GM12878 (cell line): ENCODE measurements at regions of chr2 and their contacts with region 1.

Region 1: GRCh38 chr2:102240640-102241370 is 54.0 kb downstream of the IL1RL2 start:
- DNase-seq: peak; percentile 88
- ATAC-seq: peak; percentile 96
- H3K4me3 ChIP-seq: no peak overlapping the region
- H3K27ac ChIP-seq: no peak overlapping the region
- H3K4me1 ChIP-seq: peaks cover 13% of the 10 kb centered on the region; the same call in 1 of the 2 replicates
- H3K27me3 ChIP-seq: no peaks in the 10 kb centered on the region
- CTCF ChIP-seq: peak; percentile 95 to 98 (median 97); a peak in 5 of 6 replicates
- EP300 ChIP-seq: peak; percentile 64 to 69; a peak in 3 of 4 replicates
- POLR2A ChIP-seq: no peak
- RAD21 ChIP-seq: peak; percentile 90

Region 2: DNA sequence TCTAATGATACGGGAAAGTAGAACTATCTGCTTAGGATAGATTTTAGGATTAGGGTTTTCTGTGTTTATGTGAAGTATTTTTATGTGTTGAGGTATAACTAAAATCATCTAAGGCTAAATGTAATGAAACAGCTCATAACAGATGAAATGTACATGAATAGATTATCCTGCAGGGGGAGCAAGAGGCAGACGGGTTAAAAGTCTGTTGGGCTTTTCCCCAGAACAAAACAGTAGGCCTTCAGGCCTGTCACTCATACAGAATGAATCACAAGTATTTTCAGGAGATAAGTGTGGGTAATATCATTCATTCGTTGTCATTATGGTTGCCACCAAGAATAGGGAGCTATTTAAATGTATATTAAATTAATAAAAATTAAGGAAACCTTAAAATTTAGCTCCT is 356.9 kb before region 1 on chr2:
- CTCF ChIA-PET with region 1: interaction called, 169 read pairs
- POLR2A ChIA-PET with region 1: no interaction called
- RAD21 ChIA-PET with region 1: interaction called, 113 read pairs
- SMC1A ChIA-PET with region 1: interaction called, 103 read pairs
- in situ Hi-C with region 1: loop called (anchors 5 kb)
- intact Hi-C with region 1: loop called (anchors 1 kb)
- DNase-seq: no peak
- ATAC-seq: peak; percentile 95
- H3K4me3 ChIP-seq: no peak overlapping the region
- H3K27ac ChIP-seq: no peak overlapping the region
- H3K4me1 ChIP-seq: no peaks in the 10 kb centered on the region
- H3K27me3 ChIP-seq: no peaks in the 10 kb centered on the region
- CTCF ChIP-seq: peak; percentile 50 to 70 (median 63); a peak in 5 of 6 replicates
- EP300 ChIP-seq: no peak
- POLR2A ChIP-seq: no peak
- RAD21 ChIP-seq: peak; percentile 64

Region 3: GRCh38 chr2:102033031-102033749 is 207.6 kb before region 1 on chr2:
- CTCF ChIA-PET with region 1: interaction called, 370 read pairs
- POLR2A ChIA-PET with region 1: no interaction called
- RAD21 ChIA-PET with region 1: interaction called, 26 read pairs
- SMC1A ChIA-PET with region 1: interaction called, 157 read pairs
- in situ Hi-C with region 1: no loop called
- intact Hi-C with region 1: no loop called
- DNase-seq: peak; percentile 53
- ATAC-seq: peak; percentile 94
- H3K4me3 ChIP-seq: no peak overlapping the region
- H3K27ac ChIP-seq: no peak overlapping the region
- H3K4me1 ChIP-seq: peaks cover 5% of the 10 kb centered on the region
- H3K27me3 ChIP-seq: no peaks in the 10 kb centered on the region
- CTCF ChIP-seq: no peak
- EP300 ChIP-seq: peak in 1 of 2 experiments; percentile 29; a peak in 1 of 4 replicates
- POLR2A ChIP-seq: no peak
- RAD21 ChIP-seq: no peak

Region 4: GRCh38 chr2:102082571-102083392 is 158.0 kb before region 1 on chr2:
- CTCF ChIA-PET with region 1: interaction called, 46 read pairs
- POLR2A ChIA-PET with region 1: interaction called, 7 read pairs
- RAD21 ChIA-PET with region 1: interaction called, 55 read pairs
- SMC1A ChIA-PET with region 1: interaction called, 54 read pairs
- in situ Hi-C with region 1: no loop called
- intact Hi-C with region 1: loop called (anchors 2 kb)
- DNase-seq: peak; percentile 88
- ATAC-seq: peak; percentile 83
- H3K4me3 ChIP-seq: no peak overlapping the region
- H3K27ac ChIP-seq: peak overlapping the region; percentile 59
- H3K4me1 ChIP-seq: peaks cover 31% of the 10 kb centered on the region
- H3K27me3 ChIP-seq: no peaks in the 10 kb centered on the region
- CTCF ChIP-seq: no peak
- EP300 ChIP-seq: peak; percentile 71 to 96
- POLR2A ChIP-seq: no peak
- RAD21 ChIP-seq: no peak

Region 5: GRCh38 chr2:102166189-102166845 is 74.5 kb before region 1 on chr2:
- CTCF ChIA-PET with region 1: interaction called, 33 read pairs
- POLR2A ChIA-PET with region 1: no interaction called
- RAD21 ChIA-PET with region 1: interaction called, 26 read pairs
- SMC1A ChIA-PET with region 1: interaction called, 23 read pairs
- in situ Hi-C with region 1: no loop called
- intact Hi-C with region 1: no loop called
- DNase-seq: no peak
- ATAC-seq: no peak
- H3K4me3 ChIP-seq: no peak overlapping the region
- H3K27ac ChIP-seq: no peak overlapping the region
- H3K4me1 ChIP-seq: no peaks in the 10 kb centered on the region
- H3K27me3 ChIP-seq: no peaks in the 10 kb centered on the region
- CTCF ChIP-seq: peak in 1 of 3 experiments; percentile 37; a peak in 2 of 6 replicates
- EP300 ChIP-seq: no peak
- POLR2A ChIP-seq: no peak
- RAD21 ChIP-seq: 0 out of 2 replicates have a peak, but pooled peaks have one; percentile 11

Region 6: GRCh38 chr2:102256276-102256675 is 15.5 kb after region 1 on chr2:
- CTCF ChIA-PET with region 1: interaction called, 33 read pairs
- POLR2A ChIA-PET with region 1: no interaction called
- RAD21 ChIA-PET with region 1: interaction called, 9 read pairs
- SMC1A ChIA-PET with region 1: interaction called, 11 read pairs
- in situ Hi-C with region 1: no loop called
- intact Hi-C with region 1: no loop called
- DNase-seq: no peak
- ATAC-seq: peak; percentile 38; the same call in 1 of the 3 replicates
- H3K4me3 ChIP-seq: no peak overlapping the region
- H3K27ac ChIP-seq: no peak overlapping the region
- H3K4me1 ChIP-seq: no peaks in the 10 kb centered on the region
- H3K27me3 ChIP-seq: no peaks in the 10 kb centered on the region
- CTCF ChIP-seq: no peak
- EP300 ChIP-seq: no peak
- POLR2A ChIP-seq: no peak
- RAD21 ChIP-seq: no peak

Region 7: GRCh38 chr2:102336502-102336945 is 95.7 kb after region 1 on chr2:
- CTCF ChIA-PET with region 1: no interaction called
- POLR2A ChIA-PET with region 1: no interaction called
- RAD21 ChIA-PET with region 1: no interaction called
- SMC1A ChIA-PET with region 1: no interaction called
- in situ Hi-C with region 1: no loop called
- intact Hi-C with region 1: no loop called
- DNase-seq: no peak
- ATAC-seq: no peak
- H3K4me3 ChIP-seq: no peak overlapping the region
- H3K27ac ChIP-seq: no peak overlapping the region
- H3K4me1 ChIP-seq: no peaks in the 10 kb centered on the region
- H3K27me3 ChIP-seq: peaks cover 0 to 5% of the 10 kb centered on the region in 2 experiments; a peak in 1 of 4 replicates
- CTCF ChIP-seq: no peak
- EP300 ChIP-seq: no peak
- POLR2A ChIP-seq: no peak
- RAD21 ChIP-seq: no peak

Region 8: GRCh38 chr2:102449370-102449974 is 208.7 kb after region 1 on chr2:
- CTCF ChIA-PET with region 1: interaction called, 28 read pairs
- POLR2A ChIA-PET with region 1: no interaction called
- RAD21 ChIA-PET with region 1: interaction called, 18 read pairs
- SMC1A ChIA-PET with region 1: interaction called, 11 read pairs
- in situ Hi-C with region 1: no loop called
- intact Hi-C with region 1: no loop called
- DNase-seq: no peak
- ATAC-seq: peak; percentile 78
- H3K4me3 ChIP-seq: no peak overlapping the region
- H3K27ac ChIP-seq: no peak overlapping the region
- H3K4me1 ChIP-seq: no peaks in the 10 kb centered on the region
- H3K27me3 ChIP-seq: no peaks in the 10 kb centered on the region
- CTCF ChIP-seq: peak; percentile 49 to 79 (median 58); a peak in 5 of 6 replicates
- EP300 ChIP-seq: no peak
- POLR2A ChIP-seq: no peak
- RAD21 ChIP-seq: peak; percentile 87